Naive thymus-derived CD4-positive, alpha-beta T cell (primary cell): ENCODE measurements at regions of chr6 and their contacts with region 1.

Region 1: GRCh38 chr6:137313928-137314855 is 95.0 kb upstream of the IFNGR1 start:
- DNase-seq: peak; percentile 9 to 57 (median 51)
- ATAC-seq: peak; percentile 90
- H3K4me3 ChIP-seq: no peak overlapping the region
- H3K4me3 Mint-ChIP-seq: no peak overlapping the region
- H3K27ac ChIP-seq: no peak overlapping the region
- H3K27ac Mint-ChIP-seq: no peak overlapping the region
- H3K4me1 ChIP-seq: no peaks in the 10 kb centered on the region
- H3K4me1 Mint-ChIP-seq: peaks cover 0 to 10% (median 3%) of the 10 kb centered on the region in 7 donors
- H3K27me3 ChIP-seq: no peaks in the 10 kb centered on the region
- H3K27me3 Mint-ChIP-seq: peaks cover 0 to 22% (median 0%) of the 10 kb centered on the region in 5 donors

Region 2: DNA sequence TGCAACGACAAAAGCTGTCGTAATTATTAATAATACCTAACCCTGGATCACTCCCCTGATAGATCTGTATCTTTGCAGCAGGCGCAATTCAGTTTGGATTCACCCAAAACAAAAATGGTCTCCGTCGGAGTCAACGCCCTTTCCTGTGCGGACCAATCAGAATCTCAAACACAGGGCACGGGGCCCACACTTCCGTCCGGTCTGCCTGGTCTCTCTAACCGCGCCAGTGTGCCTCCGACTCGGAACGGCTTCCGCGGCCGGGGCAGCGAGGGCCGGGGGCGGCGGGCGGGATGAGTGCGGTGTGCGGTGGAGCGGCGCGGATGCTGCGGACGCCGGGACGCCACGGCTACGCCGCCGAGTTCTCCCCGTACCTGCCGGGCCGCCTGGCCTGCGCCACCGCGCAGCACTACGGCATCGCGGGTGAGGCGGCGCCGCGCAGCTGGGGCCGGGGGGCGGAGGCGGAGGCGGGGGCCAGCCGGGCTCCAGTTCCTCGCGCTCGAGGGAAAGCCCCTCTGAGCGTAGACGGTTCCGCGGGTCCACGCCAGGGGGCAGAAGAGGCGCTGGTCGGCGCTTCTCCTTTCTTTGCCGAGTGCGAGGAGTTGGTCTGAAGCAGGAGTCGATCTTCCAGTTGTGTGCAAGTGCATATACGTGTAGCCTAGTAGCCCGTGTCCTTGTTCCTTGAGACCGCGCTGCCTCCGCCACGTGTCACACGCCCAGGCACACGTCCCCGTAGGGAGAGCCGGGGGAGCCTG is 491.6 kb before region 1 on chr6 and contains the start of gene PEX7:
- CTCF ChIA-PET with region 1: no interaction called
- POLR2A ChIA-PET with region 1: no interaction called
- intact Hi-C with region 1: loop called in 1 of 2 experiments (anchors 1 kb)
- DNase-seq: peak; percentile 83 to 94 (median 92)
- ATAC-seq: peak; percentile 95
- H3K4me3 ChIP-seq: peak within 1 kb of the TSS; percentile 96
- H3K4me3 Mint-ChIP-seq: peak within 1 kb of the TSS; percentile 87 to 99 (median 94)
- H3K27ac ChIP-seq: peak within 1 kb of the TSS; percentile 91
- H3K27ac Mint-ChIP-seq: peak within 1 kb of the TSS; percentile 91 to 99 (median 96)
- H3K4me1 ChIP-seq: peaks cover 6 to 13% of the 10 kb centered on the region in 2 donors
- H3K4me1 Mint-ChIP-seq: peaks cover 13 to 50% (median 40%) of the 10 kb centered on the region in 7 donors
- H3K27me3 ChIP-seq: peaks cover 0 to 3% of the 10 kb centered on the region in 2 donors
- H3K27me3 Mint-ChIP-seq: peaks cover 3 to 10% (median 8%) of the 10 kb centered on the region in 5 donors
- total RNA-seq, gene PEX7: 4.0 to 6.2 (median 5.4) TPM

Region 3: GRCh38 chr6:136967876-136968752 is 346.1 kb before region 1 on chr6:
- CTCF ChIA-PET with region 1: no interaction called
- POLR2A ChIA-PET with region 1: no interaction called
- intact Hi-C with region 1: loop called in 1 of 2 experiments (anchors 5 kb)
- DNase-seq: peak in 8 of 9 donors; percentile 7 to 48 (median 30)
- ATAC-seq: peak; percentile 87
- H3K4me3 ChIP-seq: no peak overlapping the region
- H3K4me3 Mint-ChIP-seq: no peak overlapping the region
- H3K27ac ChIP-seq: no peak overlapping the region
- H3K27ac Mint-ChIP-seq: no peak overlapping the region
- H3K4me1 ChIP-seq: no peaks in the 10 kb centered on the region
- H3K4me1 Mint-ChIP-seq: peaks cover 0 to 9% (median 0%) of the 10 kb centered on the region in 7 donors
- H3K27me3 ChIP-seq: no peaks in the 10 kb centered on the region
- H3K27me3 Mint-ChIP-seq: peaks cover 29 to 59% (median 47%) of the 10 kb centered on the region in 5 donors

Region 4: DNA sequence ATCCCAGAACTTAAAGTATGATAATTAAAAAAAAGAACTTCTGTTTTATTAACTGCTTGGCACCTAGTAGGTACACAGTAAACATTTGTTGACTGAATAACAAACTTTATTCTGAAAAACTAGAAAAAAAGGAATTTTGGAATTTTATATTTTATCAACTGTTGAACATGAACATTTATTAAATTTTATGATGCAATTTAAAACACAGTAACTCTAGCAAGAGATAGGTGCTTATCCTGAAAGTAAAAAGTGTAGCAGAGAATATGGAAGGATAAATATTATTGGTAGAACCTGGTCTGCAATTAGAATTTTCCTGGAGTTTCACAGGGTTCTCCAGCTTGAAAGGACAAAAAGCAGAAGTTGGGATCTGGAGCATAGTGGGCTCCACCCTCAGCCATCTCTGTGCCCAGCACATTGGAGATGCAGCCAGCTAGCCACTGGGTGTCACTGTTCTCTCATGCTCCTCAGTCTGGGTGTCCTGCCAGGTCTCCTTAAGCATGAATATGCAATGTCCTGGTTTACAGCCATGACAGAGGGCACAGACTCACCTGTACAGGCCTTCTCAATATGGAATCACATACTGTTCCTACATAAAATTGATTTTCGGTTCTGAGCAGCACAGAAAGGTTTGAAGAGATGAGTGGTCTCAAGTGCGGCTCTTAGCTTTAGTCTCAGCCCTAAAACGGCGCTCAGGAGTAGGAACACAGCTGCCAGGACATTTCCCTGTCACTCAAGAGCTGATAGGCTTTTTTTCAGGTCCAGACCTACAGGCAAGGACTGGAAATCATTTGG is 237.7 kb before region 1 on chr6:
- CTCF ChIA-PET with region 1: interaction called, 3 read pairs
- POLR2A ChIA-PET with region 1: no interaction called
- intact Hi-C with region 1: loop called (anchors 1 kb)
- DNase-seq: peak; percentile 4 to 50 (median 22)
- ATAC-seq: peak; percentile 95
- H3K4me3 ChIP-seq: no peak overlapping the region
- H3K4me3 Mint-ChIP-seq: no peak overlapping the region
- H3K27ac ChIP-seq: no peak overlapping the region
- H3K27ac Mint-ChIP-seq: no peak overlapping the region
- H3K4me1 ChIP-seq: no peaks in the 10 kb centered on the region
- H3K4me1 Mint-ChIP-seq: no peaks in the 10 kb centered on the region
- H3K27me3 ChIP-seq: no peaks in the 10 kb centered on the region
- H3K27me3 Mint-ChIP-seq: peaks cover 17 to 55% (median 24%) of the 10 kb centered on the region in 5 donors

Region 5: DNA sequence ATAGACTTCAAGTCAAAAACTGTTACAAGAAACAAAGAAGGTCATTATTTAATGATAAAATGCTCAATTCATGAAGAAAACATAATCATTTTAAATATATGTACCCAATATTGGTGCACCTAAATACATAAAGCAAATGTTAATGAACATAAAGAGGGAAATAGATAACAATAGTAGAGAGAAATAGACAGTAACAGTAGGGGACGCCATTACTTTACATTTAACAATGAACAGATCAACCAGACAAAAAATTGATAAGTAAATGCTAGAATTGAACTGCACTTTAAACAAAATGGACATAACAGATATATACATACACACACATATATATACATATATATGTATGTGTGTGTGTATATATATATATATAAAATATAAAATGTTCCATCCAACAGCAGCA is 178.1 kb before region 1 on chr6:
- CTCF ChIA-PET with region 1: no interaction called
- POLR2A ChIA-PET with region 1: no interaction called
- intact Hi-C with region 1: loop called in 1 of 2 experiments (anchors 1 kb)
- DNase-seq: no peak
- ATAC-seq: no peak
- H3K4me3 ChIP-seq: no peak overlapping the region
- H3K4me3 Mint-ChIP-seq: no peak overlapping the region
- H3K27ac ChIP-seq: no peak overlapping the region
- H3K27ac Mint-ChIP-seq: no peak overlapping the region
- H3K4me1 ChIP-seq: no peaks in the 10 kb centered on the region
- H3K4me1 Mint-ChIP-seq: no peaks in the 10 kb centered on the region
- H3K27me3 ChIP-seq: no peaks in the 10 kb centered on the region
- H3K27me3 Mint-ChIP-seq: peaks cover 12 to 57% (median 30%) of the 10 kb centered on the region in 5 donors

Region 6: DNA sequence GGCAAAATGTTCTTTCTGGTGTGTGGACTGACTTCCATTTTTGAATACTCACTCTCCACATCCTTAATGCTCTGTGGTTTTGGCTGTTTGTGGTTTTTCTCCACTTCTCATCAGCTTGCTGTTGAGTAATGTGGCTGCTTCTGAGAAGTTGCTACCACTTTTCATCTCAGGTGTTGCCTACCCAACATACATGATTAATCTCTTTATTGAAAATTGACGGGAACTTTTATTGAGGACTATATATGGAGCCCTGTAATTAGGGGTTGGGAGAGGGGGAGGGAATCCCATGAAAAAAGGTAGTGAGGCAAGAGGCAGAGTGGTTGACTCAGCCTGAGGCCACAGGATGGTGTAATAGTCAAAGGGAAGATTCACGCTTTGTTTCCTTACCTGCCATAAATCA is 158.4 kb before region 1 on chr6:
- CTCF ChIA-PET with region 1: no interaction called
- POLR2A ChIA-PET with region 1: no interaction called
- intact Hi-C with region 1: loop called in 1 of 2 experiments (anchors 1 kb)
- DNase-seq: peak in 8 of 9 donors; percentile 11 to 53 (median 26)
- ATAC-seq: peak; percentile 90
- H3K4me3 ChIP-seq: no peak overlapping the region
- H3K4me3 Mint-ChIP-seq: peak overlapping the region in 8 of 10 donors; percentile 4 to 71 (median 31)
- H3K27ac ChIP-seq: no peak overlapping the region
- H3K27ac Mint-ChIP-seq: peak overlapping the region in 3 of 9 donors; percentile 63 to 88 (median 63)
- H3K4me1 ChIP-seq: peaks cover 8 to 13% of the 10 kb centered on the region in 2 donors
- H3K4me1 Mint-ChIP-seq: peaks cover 12 to 37% (median 15%) of the 10 kb centered on the region in 7 donors
- H3K27me3 ChIP-seq: no peaks in the 10 kb centered on the region
- H3K27me3 Mint-ChIP-seq: peaks cover 4 to 30% (median 9%) of the 10 kb centered on the region in 5 donors

Region 7: GRCh38 chr6:137218917-137219663 is 95.1 kb before region 1 on chr6 and contains the start of gene IFNGR1:
- CTCF ChIA-PET with region 1: interaction called, 3 read pairs
- POLR2A ChIA-PET with region 1: no interaction called
- intact Hi-C with region 1: loop called in 1 of 2 experiments (anchors 5 kb)
- DNase-seq: peak; percentile 89 to 97 (median 93)
- ATAC-seq: peak; percentile 92
- H3K4me3 ChIP-seq: peak within 1 kb of the TSS; percentile 88
- H3K4me3 Mint-ChIP-seq: peak within 1 kb of the TSS; percentile 85 to 100 (median 99)
- H3K27ac ChIP-seq: peak within 1 kb of the TSS; percentile 91
- H3K27ac Mint-ChIP-seq: peak within 1 kb of the TSS; percentile 91 to 100 (median 100)
- H3K4me1 ChIP-seq: peaks cover 20 to 43% of the 10 kb centered on the region in 2 donors
- H3K4me1 Mint-ChIP-seq: peaks cover 36 to 84% (median 69%) of the 10 kb centered on the region in 7 donors
- H3K27me3 ChIP-seq: no peaks in the 10 kb centered on the region
- H3K27me3 Mint-ChIP-seq: no peaks in the 10 kb centered on the region
- total RNA-seq, gene IFNGR1: 29.2 to 90.7 (median 31.3) TPM